ENCODE measurements at regions of chr4 and their contacts with region 1.

Region 1: DNA sequence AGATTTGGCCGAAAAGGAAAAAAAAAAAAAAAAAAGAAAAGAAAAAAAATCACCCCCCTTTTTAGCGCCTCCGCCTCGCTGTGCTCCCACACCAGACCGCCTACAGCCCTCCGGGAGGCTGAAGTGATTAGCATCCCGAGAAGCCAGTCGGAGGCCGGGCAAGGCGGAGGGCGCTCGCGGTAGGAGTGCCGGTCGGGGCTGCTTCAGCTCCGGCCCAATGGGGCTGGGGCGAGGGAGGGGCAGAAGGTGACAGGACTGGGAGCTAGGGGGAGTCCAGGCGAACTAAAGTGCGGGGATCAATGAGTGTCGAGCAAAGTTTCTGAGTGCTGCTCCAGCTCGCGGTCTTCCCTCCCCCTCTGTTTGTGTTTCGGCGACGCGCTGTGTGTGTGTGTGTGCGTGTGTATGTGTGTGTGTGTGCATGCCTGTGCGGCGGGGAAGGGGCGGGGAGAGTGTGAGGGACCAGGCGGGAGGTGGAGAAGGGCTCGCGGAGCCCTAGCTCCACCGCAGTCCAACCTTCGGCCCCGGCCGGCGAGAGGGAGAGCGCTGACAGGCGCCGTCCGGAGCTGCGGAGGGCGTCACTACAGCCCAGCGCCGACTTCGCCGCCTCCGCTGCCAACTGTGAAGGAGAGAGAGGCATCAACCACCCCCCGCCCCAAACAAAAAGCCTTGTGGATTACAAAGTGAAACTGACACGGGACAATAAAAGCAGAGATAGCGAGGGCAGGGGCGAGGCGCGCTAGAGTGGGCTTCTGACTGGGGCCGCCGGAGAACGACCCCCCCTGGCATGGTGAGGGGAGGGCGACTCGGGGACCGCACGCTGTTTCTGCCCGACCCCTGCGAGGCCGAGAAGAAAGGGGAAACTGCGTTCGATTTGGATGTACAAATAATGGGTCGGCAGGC is at the start of gene FAT4:
- DNase-seq: peak; percentile 99
- H3K4me3 ChIP-seq: peak within 1 kb of the TSS; percentile 58 to 90 (median 82)
- H3K27ac ChIP-seq: peak within 1 kb of the TSS; percentile 82
- H3K4me1 ChIP-seq: peaks cover 29% of the 10 kb centered on the region
- H3K27me3 ChIP-seq: no peaks in the 10 kb centered on the region
- CTCF ChIP-seq: no peak
- POLR2A ChIP-seq: peak; percentile 79
- total RNA-seq, gene FAT4: 33.2 and 39.1 TPM in 2 replicates

Region 2: DNA sequence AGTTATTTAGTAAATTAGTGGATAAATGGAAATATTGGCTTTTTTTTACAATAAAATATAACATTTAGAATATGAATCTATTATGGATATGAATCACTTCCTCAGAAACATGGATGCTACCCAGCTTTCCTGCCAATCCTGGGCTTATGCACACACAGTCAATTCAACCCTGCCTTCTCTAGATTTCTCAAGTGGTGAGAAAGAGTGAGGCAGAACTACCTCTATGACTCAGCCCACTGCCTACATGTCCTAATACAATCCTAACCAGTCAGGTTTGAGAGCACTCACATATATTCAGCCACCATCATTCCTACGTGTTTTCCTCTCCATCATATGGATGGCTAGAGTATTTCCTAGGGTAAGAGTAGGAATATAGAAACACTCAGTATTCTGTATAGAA is 511.3 kb before region 1 on chr4:
- CTCF ChIA-PET with region 1: no interaction called
- POLR2A ChIA-PET with region 1: no interaction called
- dilution Hi-C with region 1: no loop called
- intact Hi-C with region 1: no loop called
- DNase-seq: peak; percentile 59
- H3K4me3 ChIP-seq: no peak overlapping the region
- H3K27ac ChIP-seq: no peak overlapping the region
- H3K4me1 ChIP-seq: peaks cover 3% of the 10 kb centered on the region
- H3K27me3 ChIP-seq: no peaks in the 10 kb centered on the region
- CTCF ChIP-seq: no peak
- POLR2A ChIP-seq: no peak

Region 3: GRCh38 chr4:125389713-125390112 is 74.8 kb after region 1 on chr4:
- CTCF ChIA-PET with region 1: interaction called, 3 read pairs
- POLR2A ChIA-PET with region 1: no interaction called
- dilution Hi-C with region 1: no loop called
- intact Hi-C with region 1: loop called (anchors 2 kb)
- DNase-seq: peak; percentile 83
- H3K4me3 ChIP-seq: peak overlapping the region in 1 of 3 experiments; percentile 3
- H3K27ac ChIP-seq: peak overlapping the region; percentile 60
- H3K4me1 ChIP-seq: peaks cover 38% of the 10 kb centered on the region
- H3K27me3 ChIP-seq: no peaks in the 10 kb centered on the region
- CTCF ChIP-seq: no peak
- POLR2A ChIP-seq: no peak

Region 4: DNA sequence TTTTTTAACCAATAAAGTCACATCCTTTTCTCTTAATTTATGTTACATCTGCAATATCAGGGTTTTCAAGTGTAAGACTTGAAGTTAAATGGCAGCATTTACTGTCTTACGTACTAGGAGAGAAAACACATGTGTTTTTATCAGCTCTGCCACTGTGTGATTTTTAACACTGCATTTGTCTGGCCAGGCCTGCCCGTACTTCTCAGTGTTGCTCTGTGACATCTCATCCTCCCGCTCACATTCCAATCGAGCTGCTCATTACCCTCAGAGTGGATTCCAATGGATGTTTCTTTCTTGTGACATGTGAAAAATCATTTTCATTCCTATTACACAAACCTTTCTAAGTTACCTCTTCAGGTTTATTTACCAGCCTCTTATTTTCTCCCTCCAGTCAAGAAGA is 420.2 kb after region 1 on chr4:
- CTCF ChIA-PET with region 1: interaction called, 29 read pairs
- POLR2A ChIA-PET with region 1: no interaction called
- dilution Hi-C with region 1: no loop called
- intact Hi-C with region 1: loop called (anchors 1 kb)
- DNase-seq: peak; percentile 84
- H3K4me3 ChIP-seq: no peak overlapping the region
- H3K27ac ChIP-seq: peak overlapping the region; percentile 91
- H3K4me1 ChIP-seq: peaks cover 41% of the 10 kb centered on the region
- H3K27me3 ChIP-seq: no peaks in the 10 kb centered on the region
- CTCF ChIP-seq: no peak
- POLR2A ChIP-seq: no peak

Region 5: DNA sequence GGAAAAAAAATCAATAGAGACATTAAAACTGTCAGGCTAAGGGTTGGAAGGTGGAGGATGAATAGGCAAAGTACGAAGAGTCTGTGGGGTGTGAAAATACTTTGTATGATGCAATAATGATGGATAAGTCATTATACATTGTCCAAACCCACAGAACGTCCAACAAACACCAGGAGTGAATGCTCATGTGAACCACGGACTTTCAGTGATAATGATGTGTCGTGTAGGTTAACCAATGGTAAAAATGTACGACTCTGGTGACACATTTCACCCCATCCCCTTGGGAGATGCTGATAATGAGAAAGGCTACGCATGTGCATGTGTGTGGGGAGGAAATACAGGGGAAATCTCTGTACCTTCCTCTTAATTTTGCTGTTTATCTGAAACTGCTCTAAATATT is 665.0 kb after region 1 on chr4:
- CTCF ChIA-PET with region 1: interaction called, 4 read pairs
- POLR2A ChIA-PET with region 1: no interaction called
- dilution Hi-C with region 1: no loop called
- intact Hi-C with region 1: loop called (anchors 2 kb)
- DNase-seq: no peak
- H3K4me3 ChIP-seq: no peak overlapping the region
- H3K27ac ChIP-seq: no peak overlapping the region
- H3K4me1 ChIP-seq: no peaks in the 10 kb centered on the region
- H3K27me3 ChIP-seq: no peaks in the 10 kb centered on the region
- CTCF ChIP-seq: no peak
- POLR2A ChIP-seq: no peak

Region 6: GRCh38 chr4:126583509-126583908 is 1268.6 kb after region 1 on chr4:
- CTCF ChIA-PET with region 1: interaction called, 22 read pairs
- POLR2A ChIA-PET with region 1: no interaction called
- dilution Hi-C with region 1: no loop called
- intact Hi-C with region 1: no loop called
- DNase-seq: peak; percentile 6
- H3K4me3 ChIP-seq: no peak overlapping the region
- H3K27ac ChIP-seq: no peak overlapping the region
- H3K4me1 ChIP-seq: no peaks in the 10 kb centered on the region
- H3K27me3 ChIP-seq: no peaks in the 10 kb centered on the region
- CTCF ChIP-seq: peak in 1 of 2 donors; percentile 7
- POLR2A ChIP-seq: no peak

Region 7: DNA sequence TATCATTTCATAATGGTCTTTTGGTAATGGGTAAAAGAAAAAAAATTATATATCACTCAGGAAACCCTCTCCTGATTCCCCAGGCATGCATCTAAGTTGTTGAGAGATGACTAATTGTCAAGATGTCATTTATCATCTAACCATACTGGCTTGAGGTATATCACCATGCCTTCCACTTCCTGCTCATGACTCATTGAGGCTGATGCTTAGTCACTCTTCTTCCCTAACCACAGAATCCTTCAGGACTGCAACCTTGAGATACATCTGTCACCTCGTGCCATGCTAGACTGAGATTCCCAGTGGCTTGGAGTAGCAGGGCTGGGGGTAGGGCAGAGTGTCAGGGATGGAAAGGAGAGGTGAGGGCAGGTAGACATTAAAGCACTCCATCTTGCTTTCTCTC is 1535.4 kb after region 1 on chr4:
- CTCF ChIA-PET with region 1: no interaction called
- POLR2A ChIA-PET with region 1: no interaction called
- dilution Hi-C with region 1: no loop called
- intact Hi-C with region 1: loop called (anchors 10 kb)
- DNase-seq: peak; percentile 71
- H3K4me3 ChIP-seq: no peak overlapping the region
- H3K27ac ChIP-seq: no peak overlapping the region
- H3K4me1 ChIP-seq: peaks cover 11% of the 10 kb centered on the region
- H3K27me3 ChIP-seq: no peaks in the 10 kb centered on the region
- CTCF ChIP-seq: no peak
- POLR2A ChIP-seq: no peak

Measured in endothelial cell of umbilical vein (primary cell).